Panc1 (cell line): ENCODE measurements at regions of chr7 and their contacts with region 1.

Region 1: DNA sequence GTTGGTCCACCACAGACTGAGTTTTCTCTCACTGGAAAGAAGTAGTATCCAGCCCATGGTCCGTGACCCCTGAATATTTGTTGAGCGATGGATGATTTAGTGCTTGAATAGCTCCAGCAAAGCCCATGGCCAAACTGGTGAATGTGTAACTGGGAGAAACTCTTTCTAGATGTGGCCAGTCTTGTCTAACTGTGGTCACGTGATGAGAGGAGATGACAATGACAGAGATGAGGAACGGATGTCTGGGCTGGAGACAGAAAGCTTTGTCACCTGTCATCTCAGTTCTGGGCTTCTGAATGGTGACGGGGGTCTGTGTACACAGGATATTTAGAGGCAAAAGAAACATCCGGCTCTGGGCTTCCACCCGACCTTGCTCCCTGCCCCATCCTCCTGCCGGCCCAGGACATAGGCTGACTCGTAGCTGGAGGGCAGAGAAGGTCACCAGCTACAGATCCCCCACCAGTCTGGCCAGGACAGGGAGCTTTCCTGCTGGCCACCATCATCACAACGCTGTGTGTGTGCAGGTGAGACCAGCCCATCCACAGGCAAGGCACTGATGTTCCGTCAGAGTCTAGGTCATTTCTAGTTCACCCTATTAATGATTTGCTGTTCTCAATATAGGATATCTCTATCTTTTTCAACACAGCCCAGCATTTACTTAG is 152.5 kb upstream of the TNS3 start:
- DNase-seq: no peak
- ATAC-seq: no peak
- H3K4me3 ChIP-seq: no peak overlapping the region
- H3K27ac ChIP-seq: peak overlapping the region; percentile 83
- H3K4me1 ChIP-seq: peaks cover 28% of the 10 kb centered on the region
- H3K27me3 ChIP-seq: no peaks in the 10 kb centered on the region
- CTCF ChIP-seq: no peak

Region 2: GRCh38 chr7:47712416-47712815 is 22.0 kb before region 1 on chr7:
- CTCF ChIA-PET with region 1: interaction called, 14 read pairs
- POLR2A ChIA-PET with region 1: interaction called, 8 read pairs
- in situ Hi-C with region 1: no loop called
- intact Hi-C with region 1: no loop called
- DNase-seq: no peak
- ATAC-seq: no peak
- H3K4me3 ChIP-seq: no peak overlapping the region
- H3K27ac ChIP-seq: peak overlapping the region; percentile 12; the same call in 1 of the 2 replicates
- H3K4me1 ChIP-seq: peaks cover 19% of the 10 kb centered on the region
- H3K27me3 ChIP-seq: no peaks in the 10 kb centered on the region
- CTCF ChIP-seq: no peak